Activated CD4-positive, alpha-beta T cell treated with anti-CD3 and anti-CD28 coated beads for 36 hours (primary cell): ENCODE measurements at regions of chr4 and their contacts with region 1.

Region 1: GRCh38 chr4:2755837-2756694 is at the start of gene TNIP2:
- DNase-seq: peak; percentile 91
- ATAC-seq: peak; percentile 78
- H3K4me3 Mint-ChIP-seq: peak within 1 kb of the TSS; percentile 79
- H3K27ac Mint-ChIP-seq: peak within 1 kb of the TSS; percentile 66
- H3K4me1 Mint-ChIP-seq: peaks cover 33% of the 10 kb centered on the region
- H3K27me3 Mint-ChIP-seq: no peaks in the 10 kb centered on the region
- total RNA-seq, gene TNIP2: 50.6 to 59.4 TPM

Region 2: GRCh38 chr4:2647403-2648158 is 108.5 kb before region 1 on chr4:
- CTCF ChIA-PET with region 1: no interaction called
- POLR2A ChIA-PET with region 1: no interaction called
- intact Hi-C with region 1: no loop called
- DNase-seq: no peak
- ATAC-seq: no peak
- H3K4me3 Mint-ChIP-seq: no peak overlapping the region
- H3K27ac Mint-ChIP-seq: no peak overlapping the region
- H3K4me1 Mint-ChIP-seq: peaks cover 16% of the 10 kb centered on the region
- H3K27me3 Mint-ChIP-seq: no peaks in the 10 kb centered on the region

Region 3: GRCh38 chr4:2792711-2793585 is 36.9 kb after region 1 on chr4 and contains the start of gene SH3BP2:
- CTCF ChIA-PET with region 1: interaction called, 3 read pairs
- POLR2A ChIA-PET with region 1: no interaction called
- intact Hi-C with region 1: loop called (anchors 1 to 5 kb)
- DNase-seq: peak; percentile 80
- ATAC-seq: peak; percentile 42
- H3K4me3 Mint-ChIP-seq: peak within 1 kb of the TSS; percentile 85
- H3K27ac Mint-ChIP-seq: peak within 1 kb of the TSS; percentile 87
- H3K4me1 Mint-ChIP-seq: peaks cover 43% of the 10 kb centered on the region
- H3K27me3 Mint-ChIP-seq: no peaks in the 10 kb centered on the region
- total RNA-seq, gene SH3BP2: 63.3 to 68.3 TPM

Region 4: DNA sequence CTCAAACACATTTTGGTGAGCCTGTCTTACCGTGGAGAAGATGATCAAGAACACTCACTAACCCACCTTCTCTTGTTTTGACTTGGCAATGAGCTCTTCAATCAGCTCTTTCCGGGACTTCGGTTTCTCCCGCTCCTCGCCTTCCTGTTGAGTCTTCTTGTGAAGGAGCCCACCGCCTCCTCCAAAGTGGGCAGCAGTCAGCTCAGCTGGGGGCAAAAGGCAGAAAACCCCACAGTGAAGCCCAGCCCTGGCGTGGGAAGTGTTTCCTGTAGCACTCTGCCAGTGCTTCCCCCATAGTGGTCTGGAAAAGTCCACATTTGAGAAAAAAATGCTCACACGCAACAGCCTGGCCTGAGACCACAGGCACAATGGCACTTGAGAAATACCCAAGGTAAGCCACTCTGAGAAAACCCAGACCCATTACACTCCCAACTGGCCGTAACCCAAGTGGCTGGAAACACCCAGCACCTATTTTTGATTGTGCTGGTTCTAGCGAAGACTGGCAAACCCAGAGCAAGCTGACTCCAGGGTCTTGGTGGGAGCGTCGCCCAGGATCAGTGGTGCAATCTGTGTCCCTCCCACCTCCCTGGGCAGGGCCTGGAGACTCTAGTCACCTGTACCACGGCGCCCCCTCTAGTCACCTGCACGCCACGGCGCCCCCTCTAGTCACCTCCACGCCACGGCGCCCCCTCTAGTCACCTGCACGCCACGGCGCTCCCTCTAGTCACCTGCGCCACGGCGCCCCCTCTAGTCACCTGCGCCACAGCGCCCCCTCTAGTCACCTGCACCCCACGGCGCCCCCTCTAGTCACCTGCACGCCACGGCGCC is 198.5 kb after region 1 on chr4:
- CTCF ChIA-PET with region 1: interaction called, 7 read pairs
- POLR2A ChIA-PET with region 1: no interaction called
- intact Hi-C with region 1: loop called in 1 of 2 experiments (anchors 1 kb)
- DNase-seq: peak; percentile 88
- ATAC-seq: peak; percentile 83
- H3K4me3 Mint-ChIP-seq: peak overlapping the region; percentile 51
- H3K27ac Mint-ChIP-seq: peak overlapping the region; percentile 90
- H3K4me1 Mint-ChIP-seq: peaks cover 69% of the 10 kb centered on the region
- H3K27me3 Mint-ChIP-seq: no peaks in the 10 kb centered on the region

Region 5: DNA sequence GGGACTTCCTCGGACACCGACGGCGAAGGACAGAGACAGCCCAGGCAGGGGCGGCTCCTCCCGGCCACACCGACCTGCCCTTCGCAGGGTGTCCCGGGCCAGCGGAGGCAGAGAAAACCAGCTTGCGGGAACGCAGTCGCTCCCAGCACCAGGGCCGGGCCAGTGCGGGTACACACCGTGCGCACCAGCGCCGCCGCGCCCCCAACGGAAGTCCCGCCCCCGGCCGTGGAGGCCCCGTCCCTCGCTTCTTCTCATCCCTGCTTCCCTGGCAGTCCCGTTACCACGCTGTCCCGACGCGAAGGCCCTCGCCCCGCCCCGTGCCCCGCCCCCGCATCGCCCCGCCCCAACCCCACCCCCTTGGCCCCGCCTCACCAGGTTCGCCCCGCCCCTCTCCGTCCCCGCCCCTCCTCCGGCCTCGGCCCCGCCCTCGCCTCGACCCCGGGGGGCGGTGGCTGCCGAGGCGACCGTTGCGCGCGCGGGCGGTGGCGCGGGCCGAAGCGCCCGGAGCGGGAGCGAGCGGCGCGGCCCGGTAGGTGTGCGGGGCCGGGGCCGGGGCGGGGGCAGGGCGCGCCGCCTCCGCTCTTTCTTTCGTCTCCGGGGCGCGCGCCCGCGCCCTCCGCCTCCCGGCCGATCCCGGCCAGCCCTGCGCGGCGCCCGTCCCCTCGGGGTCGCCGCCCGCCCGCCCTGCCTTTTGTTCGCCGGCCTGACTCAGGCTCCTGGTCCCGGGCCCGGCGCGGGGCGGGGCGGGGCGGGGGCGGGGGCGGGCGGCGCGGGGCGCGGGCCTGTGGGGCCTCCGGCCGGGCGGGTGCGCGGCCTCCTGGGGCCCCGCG is 536.7 kb after region 1 on chr4 and contains the start of gene RGS12:
- CTCF ChIA-PET with region 1: no interaction called
- POLR2A ChIA-PET with region 1: no interaction called
- intact Hi-C with region 1: loop called in 1 of 2 experiments (anchors 2 kb)
- DNase-seq: peak; percentile 93
- ATAC-seq: peak; percentile 95
- H3K4me3 Mint-ChIP-seq: peak within 1 kb of the TSS; percentile 81
- H3K27ac Mint-ChIP-seq: peak within 1 kb of the TSS; percentile 64
- H3K4me1 Mint-ChIP-seq: peaks cover 11% of the 10 kb centered on the region
- H3K27me3 Mint-ChIP-seq: peaks cover 4% of the 10 kb centered on the region
- total RNA-seq, gene RGS12: 8.0 to 9.4 TPM